Dendritic cell treated with granulocyte-macrophage colony-stimulating factor and Interleukin-4, amounts not matched to agents 40 ng/mL and 50 ng/mL, for 4 days (primary cell): ENCODE measurements at regions of chr17 and their contacts with region 1.

Region 1: GRCh38 chr17:33750943-33751701 is 458.0 kb upstream of the ASIC2 start:
- H3K4me3 Mint-ChIP-seq: no peak overlapping the region
- H3K27ac Mint-ChIP-seq: no peak overlapping the region
- H3K4me1 Mint-ChIP-seq: peaks cover 10% of the 10 kb centered on the region
- H3K27me3 Mint-ChIP-seq: peaks cover 29% of the 10 kb centered on the region

Region 2: GRCh38 chr17:33520426-33521330 is 230.4 kb before region 1 on chr17:
- intact Hi-C with region 1: loop called (anchors 5 kb)
- H3K4me3 Mint-ChIP-seq: no peak overlapping the region
- H3K27ac Mint-ChIP-seq: no peak overlapping the region
- H3K4me1 Mint-ChIP-seq: no peaks in the 10 kb centered on the region
- H3K27me3 Mint-ChIP-seq: peaks cover 4% of the 10 kb centered on the region

Region 3: DNA sequence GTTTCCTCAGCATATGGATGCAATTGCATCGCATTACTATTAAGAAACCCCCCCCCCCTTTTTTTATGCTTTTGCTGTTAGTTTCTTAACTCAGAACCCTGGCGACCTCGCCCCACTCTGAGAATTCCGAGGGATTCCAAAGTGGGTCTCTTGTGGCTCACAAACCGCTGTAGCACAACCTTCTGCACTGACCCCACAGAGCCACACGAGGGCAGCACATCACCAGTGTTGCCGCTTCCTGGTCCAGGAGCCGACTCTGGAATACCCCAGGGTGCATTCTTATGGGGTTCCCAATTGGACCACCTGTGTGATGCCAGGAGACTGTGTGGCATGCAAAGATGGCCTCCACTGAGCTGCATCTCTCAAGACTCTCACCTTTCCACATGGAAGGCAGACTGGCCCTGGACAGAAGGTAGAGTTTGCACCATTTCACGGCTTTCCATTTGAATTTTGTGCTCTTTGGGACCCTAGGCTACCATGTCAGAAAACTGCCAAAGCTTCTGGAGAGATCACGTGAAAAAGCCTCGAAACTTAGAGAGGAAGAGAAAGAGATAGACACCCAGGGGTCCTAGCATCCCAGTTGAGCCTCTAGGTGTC is 25.3 kb before region 1 on chr17:
- intact Hi-C with region 1: loop called (anchors 1 kb)
- H3K4me3 Mint-ChIP-seq: no peak overlapping the region
- H3K27ac Mint-ChIP-seq: no peak overlapping the region
- H3K4me1 Mint-ChIP-seq: no peaks in the 10 kb centered on the region
- H3K27me3 Mint-ChIP-seq: peaks cover 12% of the 10 kb centered on the region

Region 4: DNA sequence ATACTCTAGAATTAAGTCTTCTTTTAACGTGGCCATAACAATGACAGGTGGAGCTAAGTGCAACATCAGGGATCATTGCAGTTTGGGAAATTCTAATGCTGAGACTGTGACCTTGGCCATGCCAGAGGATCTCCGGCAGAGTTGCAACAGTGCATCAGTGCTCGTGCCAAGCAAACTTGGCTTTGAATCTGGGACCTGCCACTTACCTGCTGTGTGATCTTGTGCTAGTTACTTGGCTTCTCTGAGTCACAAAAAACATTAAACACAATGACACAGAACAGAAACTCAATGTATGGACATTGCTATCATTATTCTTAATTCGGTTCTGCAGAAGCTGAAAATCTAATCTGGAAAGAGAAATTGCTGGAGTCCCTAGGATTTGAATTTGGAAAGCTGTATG is 68.4 kb after region 1 on chr17:
- intact Hi-C with region 1: no loop called
- H3K4me3 Mint-ChIP-seq: no peak overlapping the region
- H3K27ac Mint-ChIP-seq: no peak overlapping the region
- H3K4me1 Mint-ChIP-seq: no peaks in the 10 kb centered on the region
- H3K27me3 Mint-ChIP-seq: peaks cover 20% of the 10 kb centered on the region

Region 5: GRCh38 chr17:35373534-35373983 is 1622.4 kb after region 1 on chr17 and contains the start of gene SLFN11:
- intact Hi-C with region 1: no loop called
- H3K4me3 Mint-ChIP-seq: peak within 1 kb of the TSS; percentile 81
- H3K27ac Mint-ChIP-seq: peak within 1 kb of the TSS; percentile 95
- H3K4me1 Mint-ChIP-seq: peaks cover 71% of the 10 kb centered on the region
- H3K27me3 Mint-ChIP-seq: no peaks in the 10 kb centered on the region